Heart right ventricle (tissue), 16 donors: ENCODE measurements at regions of chr2 and their contacts with region 1.

Region 1: GRCh38 chr2:177489719-177490301 is 97.2 kb downstream of the AGPS start:
- DNase-seq: peak in 1 of 2 donors; percentile 13
- ATAC-seq: no peak
- H3K4me3 ChIP-seq: no peak overlapping the region
- H3K27ac ChIP-seq: no peak overlapping the region
- H3K4me1 ChIP-seq: no peaks in the 10 kb centered on the region
- H3K27me3 ChIP-seq: no peaks in the 10 kb centered on the region
- CTCF ChIP-seq: peak; percentile 29 to 78 (median 63)

Region 2: GRCh38 chr2:177029480-177029879 is 460.3 kb before region 1 on chr2:
- intact Hi-C with region 1: no loop called
- DNase-seq: no peak
- ATAC-seq: no peak
- H3K4me3 ChIP-seq: no peak overlapping the region
- H3K27ac ChIP-seq: no peak overlapping the region
- H3K4me1 ChIP-seq: no peaks in the 10 kb centered on the region
- H3K27me3 ChIP-seq: peaks cover 0 to 43% (median 9%) of the 10 kb centered on the region in 7 donors
- CTCF ChIP-seq: no peak

Region 3: DNA sequence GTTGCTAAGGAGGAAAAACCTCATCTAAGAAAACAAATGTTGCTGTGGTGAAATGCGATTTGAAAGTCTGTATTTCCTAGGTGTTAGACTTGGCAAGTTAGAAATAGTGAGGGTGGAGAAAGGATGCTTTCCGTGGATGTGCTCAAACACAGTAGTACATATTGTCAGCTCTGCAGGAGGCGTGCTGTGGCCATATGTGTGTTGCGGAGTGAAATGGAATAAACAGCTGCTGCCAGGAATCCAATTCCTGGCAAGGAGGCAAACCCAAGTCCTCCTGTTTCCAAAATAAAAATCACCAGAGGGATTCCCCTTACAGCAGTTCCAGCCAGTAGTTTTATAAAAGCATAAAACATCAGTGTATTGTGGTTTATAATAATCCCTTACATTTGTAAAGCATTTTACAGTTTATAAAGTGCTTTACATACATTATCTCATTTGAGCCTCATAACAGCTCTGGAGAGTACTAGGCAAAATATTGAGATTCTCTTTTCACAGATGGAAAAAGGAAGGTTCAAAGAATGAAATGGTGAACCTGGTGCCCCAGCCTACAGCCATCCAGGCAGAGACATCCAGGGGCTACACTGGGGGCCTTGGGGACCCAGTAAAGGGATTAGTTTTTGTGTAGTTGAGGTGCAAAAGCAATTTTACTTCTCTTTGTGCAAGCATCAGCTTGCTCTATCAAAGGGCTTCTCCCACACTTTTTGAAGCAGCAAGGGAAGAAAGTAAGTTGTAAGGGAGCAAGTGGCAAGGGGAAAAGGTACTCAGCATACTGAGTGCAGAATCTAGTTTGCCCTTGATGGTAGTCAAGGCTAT is 108.7 kb after region 1 on chr2:
- intact Hi-C with region 1: loop called in 6 of 10 experiments (anchors 5 to 10 kb)
- DNase-seq: peak; percentile 22 to 52
- ATAC-seq: peak; percentile 67 to 93 (median 84)
- H3K4me3 ChIP-seq: peak overlapping the region in 2 of 10 donors; percentile 9 to 13
- H3K27ac ChIP-seq: peak overlapping the region in 7 of 10 donors; percentile 11 to 57 (median 44)
- H3K4me1 ChIP-seq: peaks cover 0 to 29% (median 22%) of the 10 kb centered on the region in 9 donors
- H3K27me3 ChIP-seq: no peaks in the 10 kb centered on the region
- CTCF ChIP-seq: peak in 3 of 9 donors; percentile 23 to 41 (median 35)

Region 4: DNA sequence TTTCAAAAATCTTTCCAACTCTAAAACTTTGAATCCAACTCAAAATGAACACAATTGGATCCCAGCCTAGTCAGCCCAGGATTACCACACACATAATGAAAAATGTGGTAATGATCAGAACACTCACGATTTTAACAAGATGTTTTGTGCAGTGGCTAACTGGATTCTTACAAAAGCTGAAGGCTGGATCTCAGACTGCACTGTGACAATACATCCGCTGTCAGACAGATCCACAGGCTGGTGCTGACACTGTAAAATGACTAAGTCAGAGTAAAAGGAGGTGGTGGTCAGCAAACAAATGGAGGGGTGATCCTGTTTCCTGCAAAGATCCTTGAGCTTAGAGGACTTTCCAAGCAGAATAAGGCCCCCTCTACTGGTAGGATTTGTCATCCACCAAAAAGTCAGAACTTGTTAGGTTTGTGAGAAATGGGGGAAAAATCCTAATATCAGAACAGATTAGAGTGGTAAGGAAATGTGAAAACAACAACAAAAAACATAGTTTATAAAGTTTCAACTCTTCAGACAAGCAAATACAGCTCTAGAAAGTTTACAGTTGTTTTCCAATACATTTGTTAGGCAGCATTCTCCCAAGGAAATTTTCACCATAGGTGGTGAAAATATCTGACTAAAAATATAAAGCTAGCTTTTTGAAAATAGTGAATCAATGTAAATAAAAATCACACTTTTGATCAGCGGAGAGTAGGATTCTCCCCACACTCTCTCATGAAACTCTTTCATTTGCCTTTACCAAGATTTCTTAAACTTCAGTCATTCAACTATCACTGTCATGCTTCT is 114.7 kb after region 1 on chr2:
- intact Hi-C with region 1: loop called in 8 of 10 experiments (anchors 5 to 10 kb)
- DNase-seq: peak in 1 of 2 donors; percentile 25
- ATAC-seq: peak in 7 of 8 donors; percentile 44 to 73 (median 66)
- H3K4me3 ChIP-seq: no peak overlapping the region
- H3K27ac ChIP-seq: peak overlapping the region in 2 of 10 donors; percentile 6 to 36
- H3K4me1 ChIP-seq: peaks cover 0 to 13% (median 3%) of the 10 kb centered on the region in 9 donors
- H3K27me3 ChIP-seq: no peaks in the 10 kb centered on the region
- CTCF ChIP-seq: peak; percentile 37 to 83 (median 67)

Region 5: DNA sequence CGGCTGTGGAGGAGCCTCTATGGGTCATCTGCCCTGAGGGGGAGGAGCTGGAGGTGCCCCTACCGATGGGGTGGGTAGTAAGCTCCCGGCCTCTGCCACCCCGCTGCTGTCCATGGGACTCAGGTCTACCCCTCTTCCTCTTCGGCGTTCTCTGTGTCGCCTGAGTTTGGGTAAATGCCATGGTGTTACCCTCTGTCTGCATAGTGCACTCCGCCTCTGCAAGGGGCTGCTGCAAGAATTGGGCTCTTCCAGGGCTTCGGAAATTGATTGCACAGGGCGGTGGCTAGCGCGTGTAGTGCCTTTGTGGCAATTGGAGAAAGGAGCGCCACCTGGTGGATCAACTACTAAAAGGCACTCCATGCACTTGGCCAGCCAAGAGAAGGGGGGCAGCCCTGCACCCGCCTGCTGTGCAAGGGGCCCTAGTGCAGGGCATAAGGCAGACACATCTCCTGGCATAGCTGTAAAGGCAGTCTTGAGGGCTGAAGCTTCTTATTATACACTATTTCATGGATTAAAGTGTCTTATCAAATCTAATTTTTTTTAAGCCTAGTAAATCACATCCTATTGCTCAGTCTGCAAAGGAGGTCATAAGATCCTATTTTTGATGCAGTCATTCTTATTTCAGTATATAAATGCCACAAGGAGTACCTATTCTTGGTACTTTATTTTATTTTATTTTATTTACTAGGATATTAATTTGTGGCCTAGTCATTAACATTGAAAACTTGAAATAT is 273.9 kb after region 1 on chr2:
- intact Hi-C with region 1: loop called in 3 of 10 experiments (anchors 10 kb)
- DNase-seq: peak; percentile 60 to 74
- ATAC-seq: peak; percentile 80 to 91 (median 84)
- H3K4me3 ChIP-seq: peak overlapping the region in 1 of 10 donors; percentile 20
- H3K27ac ChIP-seq: no peak overlapping the region
- H3K4me1 ChIP-seq: peaks cover 0 to 11% (median 6%) of the 10 kb centered on the region in 9 donors
- H3K27me3 ChIP-seq: no peaks in the 10 kb centered on the region
- CTCF ChIP-seq: peak; percentile 77 to 92 (median 85)

Region 6: DNA sequence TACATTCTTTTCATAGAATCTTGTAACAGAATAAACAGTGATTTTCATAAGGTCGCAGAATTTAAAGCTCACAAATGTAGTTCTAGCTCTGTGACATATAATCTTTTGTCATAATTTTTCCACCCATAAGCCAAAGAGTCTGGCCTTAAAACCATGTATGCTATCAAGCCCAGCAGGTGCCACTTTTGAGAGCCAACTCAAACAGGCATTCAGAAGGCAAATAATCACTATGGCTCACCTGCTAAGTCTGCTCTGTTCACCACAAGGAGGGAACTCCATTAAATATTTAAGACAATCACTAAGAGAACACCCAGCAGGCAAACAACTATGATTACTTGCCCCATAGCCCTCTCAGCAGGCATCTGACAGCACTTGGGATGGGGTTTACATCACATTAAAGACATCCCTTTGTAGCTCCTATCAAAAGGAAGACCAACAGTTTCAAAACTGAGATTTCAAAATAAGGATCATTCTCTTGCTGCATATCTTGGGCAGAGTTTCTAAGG is 341.1 kb after region 1 on chr2:
- intact Hi-C with region 1: no loop called
- DNase-seq: no peak
- ATAC-seq: no peak
- H3K4me3 ChIP-seq: no peak overlapping the region
- H3K27ac ChIP-seq: no peak overlapping the region
- H3K4me1 ChIP-seq: no peaks in the 10 kb centered on the region
- H3K27me3 ChIP-seq: no peaks in the 10 kb centered on the region
- CTCF ChIP-seq: no peak

Region 7: GRCh38 chr2:178018141-178018540 is 528.3 kb after region 1 on chr2:
- intact Hi-C with region 1: no loop called
- DNase-seq: no peak
- ATAC-seq: no peak
- H3K4me3 ChIP-seq: no peak overlapping the region
- H3K27ac ChIP-seq: no peak overlapping the region
- H3K4me1 ChIP-seq: no peaks in the 10 kb centered on the region
- H3K27me3 ChIP-seq: no peaks in the 10 kb centered on the region
- CTCF ChIP-seq: no peak